ENCODE measurements at regions of chr4 and their contacts with region 1.

Region 1: GRCh38 chr4:118787844-118788380 is 48.0 kb downstream of the SEC24D start:
- DNase-seq: no peak
- ATAC-seq: no peak
- H3K4me3 ChIP-seq: no peak overlapping the region
- H3K27ac ChIP-seq: no peak overlapping the region
- H3K4me1 ChIP-seq: no peaks in the 10 kb centered on the region
- H3K27me3 ChIP-seq: no peaks in the 10 kb centered on the region
- CTCF ChIP-seq: no peak

Region 2: DNA sequence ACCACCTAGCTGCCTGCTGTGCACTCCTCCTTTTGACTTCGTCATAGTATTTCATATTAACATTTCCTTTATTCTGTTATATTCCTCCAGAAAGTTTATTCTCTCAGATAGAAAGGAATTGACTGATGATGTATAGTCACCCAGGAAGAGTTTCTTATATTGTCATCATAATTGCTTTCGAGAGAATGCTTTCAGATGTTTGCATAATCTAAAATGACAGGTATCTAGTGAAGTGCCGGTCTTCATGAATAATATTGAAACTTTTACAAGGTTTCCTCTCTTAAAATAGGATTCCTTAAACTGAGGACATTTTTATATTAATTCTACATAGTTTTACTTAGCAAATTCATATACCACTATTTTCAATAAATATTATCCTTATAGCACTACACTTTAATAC is 37.9 kb after region 1 on chr4:
- intact Hi-C with region 1: loop called in 1 of 2 experiments (anchors 5 kb)
- DNase-seq: no peak
- ATAC-seq: no peak
- H3K4me3 ChIP-seq: no peak overlapping the region
- H3K27ac ChIP-seq: no peak overlapping the region
- H3K4me1 ChIP-seq: peaks cover 7% of the 10 kb centered on the region
- H3K27me3 ChIP-seq: no peaks in the 10 kb centered on the region
- CTCF ChIP-seq: no peak

Measured in psoas muscle (tissue), 8 donors.